Activated naive CD4-positive, alpha-beta T cell treated with anti-CD3 and anti-CD28 coated beads, Interleukin-2, amount 10 ng/mL, durations not matched to agents 7 days and 5 days (primary cell): ENCODE measurements at regions of chr2 and their contacts with region 1.

Region 1: DNA sequence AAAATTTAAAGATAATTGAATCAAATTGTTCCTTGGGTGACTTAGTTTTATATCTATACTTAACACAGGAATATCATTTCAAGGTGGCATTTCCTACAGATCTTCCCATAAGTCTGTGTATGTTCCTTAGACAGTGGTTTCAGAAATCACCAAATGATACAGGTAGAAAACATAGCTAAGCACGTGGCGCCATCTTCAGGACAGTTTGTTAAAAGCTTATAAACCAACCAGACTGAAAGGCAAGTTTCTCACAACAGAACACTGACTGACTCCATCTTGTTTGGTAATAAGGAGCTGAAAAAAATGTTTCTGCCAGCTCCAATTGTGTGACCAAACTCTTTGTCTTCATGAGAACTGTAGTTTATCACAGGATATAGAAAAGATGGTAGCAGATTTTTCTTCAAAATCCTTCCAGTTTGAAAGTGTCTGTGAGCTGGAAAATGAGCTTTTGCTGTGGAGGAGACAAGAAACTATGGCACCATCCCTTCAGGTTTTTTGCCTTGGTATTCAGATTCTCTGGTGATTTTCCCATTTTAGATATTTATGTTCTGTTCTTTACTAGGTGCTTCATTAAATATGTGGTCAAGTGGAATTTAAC is 34.8 kb upstream of the NEUROD1 start:
- DNase-seq: peak; percentile 82
- H3K4me3 Mint-ChIP-seq: no peak overlapping the region
- H3K27ac Mint-ChIP-seq: no peak overlapping the region
- H3K4me1 Mint-ChIP-seq: no peaks in the 10 kb centered on the region
- H3K27me3 Mint-ChIP-seq: peaks cover 4% of the 10 kb centered on the region

Region 2: GRCh38 chr2:181077128-181077709 is 637.9 kb before region 1 on chr2:
- CTCF ChIA-PET with region 1: interaction called, 12 read pairs
- DNase-seq: no peak
- H3K4me3 Mint-ChIP-seq: no peak overlapping the region
- H3K27ac Mint-ChIP-seq: no peak overlapping the region
- H3K4me1 Mint-ChIP-seq: peaks cover 6% of the 10 kb centered on the region
- H3K27me3 Mint-ChIP-seq: peaks cover 7% of the 10 kb centered on the region

Region 3: DNA sequence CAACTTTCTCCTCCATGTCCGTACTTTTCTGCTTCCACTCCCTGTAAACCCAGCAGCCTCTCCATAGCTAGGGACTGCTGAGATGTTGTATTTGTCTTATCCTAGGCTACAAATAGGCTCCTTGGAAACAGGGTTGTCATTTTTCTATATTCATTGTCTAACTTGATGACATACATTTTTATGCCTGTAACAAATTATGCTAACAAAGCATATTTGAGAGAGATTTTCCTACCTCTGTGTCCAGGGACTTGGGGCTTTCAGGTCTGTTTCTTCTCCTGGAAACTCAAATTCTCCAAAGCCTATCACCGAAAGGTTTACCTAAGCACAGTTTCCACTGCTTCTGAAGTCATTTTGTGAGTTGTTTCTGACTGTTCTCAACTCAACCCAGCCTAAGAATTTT is 632.0 kb before region 1 on chr2:
- CTCF ChIA-PET with region 1: interaction called, 12 read pairs
- DNase-seq: no peak
- H3K4me3 Mint-ChIP-seq: no peak overlapping the region
- H3K27ac Mint-ChIP-seq: no peak overlapping the region
- H3K4me1 Mint-ChIP-seq: no peaks in the 10 kb centered on the region
- H3K27me3 Mint-ChIP-seq: peaks cover 14% of the 10 kb centered on the region

Region 4: GRCh38 chr2:181252262-181253148 is 462.6 kb before region 1 on chr2:
- CTCF ChIA-PET with region 1: no interaction called
- DNase-seq: no peak
- H3K4me3 Mint-ChIP-seq: no peak overlapping the region
- H3K27ac Mint-ChIP-seq: no peak overlapping the region
- H3K4me1 Mint-ChIP-seq: peaks cover 16% of the 10 kb centered on the region
- H3K27me3 Mint-ChIP-seq: no peaks in the 10 kb centered on the region

Region 5: GRCh38 chr2:181566334-181567032 is 148.6 kb before region 1 on chr2:
- CTCF ChIA-PET with region 1: interaction called, 120 read pairs
- DNase-seq: no peak
- H3K4me3 Mint-ChIP-seq: no peak overlapping the region
- H3K27ac Mint-ChIP-seq: no peak overlapping the region
- H3K4me1 Mint-ChIP-seq: peaks cover 4% of the 10 kb centered on the region
- H3K27me3 Mint-ChIP-seq: peaks cover 5% of the 10 kb centered on the region

Region 6: GRCh38 chr2:181573140-181573736 is 141.9 kb before region 1 on chr2:
- CTCF ChIA-PET with region 1: interaction called, 120 read pairs
- DNase-seq: no peak
- H3K4me3 Mint-ChIP-seq: no peak overlapping the region
- H3K27ac Mint-ChIP-seq: no peak overlapping the region
- H3K4me1 Mint-ChIP-seq: peaks cover 2% of the 10 kb centered on the region
- H3K27me3 Mint-ChIP-seq: peaks cover 5% of the 10 kb centered on the region

Region 7: GRCh38 chr2:181750250-181751225 is 35.4 kb after region 1 on chr2:
- CTCF ChIA-PET with region 1: no interaction called
- DNase-seq: no peak
- H3K4me3 Mint-ChIP-seq: no peak overlapping the region
- H3K27ac Mint-ChIP-seq: no peak overlapping the region
- H3K4me1 Mint-ChIP-seq: no peaks in the 10 kb centered on the region
- H3K27me3 Mint-ChIP-seq: peaks cover 24% of the 10 kb centered on the region

Region 8: GRCh38 chr2:181770145-181770544 is 55.0 kb after region 1 on chr2:
- CTCF ChIA-PET with region 1: no interaction called
- DNase-seq: no peak
- H3K4me3 Mint-ChIP-seq: no peak overlapping the region
- H3K27ac Mint-ChIP-seq: no peak overlapping the region
- H3K4me1 Mint-ChIP-seq: peaks cover 3% of the 10 kb centered on the region
- H3K27me3 Mint-ChIP-seq: no peaks in the 10 kb centered on the region